AG04450 (cell line): ENCODE measurements at regions of chr1 and their contacts with region 1.

Region 1: GRCh38 chr1:179706339-179706941 is 36.7 kb upstream of the FAM163A start:
- DNase-seq: peak; percentile 38
- H3K4me3 ChIP-seq: no peak overlapping the region
- H3K27ac ChIP-seq: no peak overlapping the region
- H3K27me3 ChIP-seq: peaks cover 2% of the 10 kb centered on the region
- CTCF ChIP-seq: peak; percentile 80

Region 2: GRCh38 chr1:179586107-179586823 is 120.2 kb before region 1 on chr1:
- CTCF ChIA-PET with region 1: no interaction called
- POLR2A ChIA-PET with region 1: no interaction called
- DNase-seq: no peak
- H3K4me3 ChIP-seq: peak overlapping the region; percentile 32; the same call in 1 of the 2 replicates
- H3K27ac ChIP-seq: no peak overlapping the region
- H3K27me3 ChIP-seq: peaks cover 17% of the 10 kb centered on the region
- CTCF ChIP-seq: peak; percentile 34

Region 3: DNA sequence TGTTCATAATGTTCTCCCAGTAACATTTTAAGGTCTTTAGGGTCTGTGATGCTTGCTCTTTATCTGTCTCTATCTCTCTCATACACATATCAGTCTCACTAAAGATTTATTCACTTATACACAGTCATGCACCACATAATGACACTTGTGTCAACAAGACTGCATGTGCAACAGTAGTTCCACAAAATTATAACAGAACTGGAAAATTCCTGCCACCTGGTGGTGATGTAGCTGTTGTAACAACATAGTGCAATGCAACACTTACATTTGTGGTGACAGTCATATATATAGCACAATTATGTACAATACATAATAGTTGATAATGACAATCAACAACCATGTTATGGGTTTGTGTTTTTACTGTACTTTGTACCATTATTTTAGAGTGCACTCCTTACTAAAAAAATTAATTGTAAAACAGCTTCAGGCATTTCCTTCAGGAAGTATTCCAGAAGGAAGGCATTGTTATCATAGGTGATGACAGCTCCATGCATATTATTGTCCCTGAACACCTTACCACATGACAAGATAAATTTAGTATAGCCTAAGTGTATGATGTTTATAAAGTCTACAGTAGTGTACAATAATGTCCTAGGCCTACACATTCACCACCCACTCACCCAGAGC is 106.7 kb before region 1 on chr1:
- CTCF ChIA-PET with region 1: no interaction called
- POLR2A ChIA-PET with region 1: no interaction called
- DNase-seq: no peak
- H3K4me3 ChIP-seq: no peak overlapping the region
- H3K27ac ChIP-seq: no peak overlapping the region
- H3K27me3 ChIP-seq: no peaks in the 10 kb centered on the region
- CTCF ChIP-seq: peak; percentile 39

Region 4: GRCh38 chr1:179719272-179719671 is 12.8 kb after region 1 on chr1:
- CTCF ChIA-PET with region 1: interaction called, 16 read pairs
- POLR2A ChIA-PET with region 1: no interaction called
- DNase-seq: no peak
- H3K4me3 ChIP-seq: no peak overlapping the region
- H3K27ac ChIP-seq: no peak overlapping the region
- H3K27me3 ChIP-seq: no peaks in the 10 kb centered on the region
- CTCF ChIP-seq: no peak

Region 5: GRCh38 chr1:179742717-179743678 is 36.6 kb after region 1 on chr1 and contains the start of gene FAM163A:
- CTCF ChIA-PET with region 1: interaction called, 10 read pairs
- POLR2A ChIA-PET with region 1: no interaction called
- DNase-seq: no peak
- H3K4me3 ChIP-seq: no peak within 1 kb of the TSS
- H3K27ac ChIP-seq: no peak within 1 kb of the TSS
- H3K27me3 ChIP-seq: peaks cover 44% of the 10 kb centered on the region
- CTCF ChIP-seq: no peak
- polyA plus RNA-seq, gene FAM163A: not detected in 2 replicates

Region 6: DNA sequence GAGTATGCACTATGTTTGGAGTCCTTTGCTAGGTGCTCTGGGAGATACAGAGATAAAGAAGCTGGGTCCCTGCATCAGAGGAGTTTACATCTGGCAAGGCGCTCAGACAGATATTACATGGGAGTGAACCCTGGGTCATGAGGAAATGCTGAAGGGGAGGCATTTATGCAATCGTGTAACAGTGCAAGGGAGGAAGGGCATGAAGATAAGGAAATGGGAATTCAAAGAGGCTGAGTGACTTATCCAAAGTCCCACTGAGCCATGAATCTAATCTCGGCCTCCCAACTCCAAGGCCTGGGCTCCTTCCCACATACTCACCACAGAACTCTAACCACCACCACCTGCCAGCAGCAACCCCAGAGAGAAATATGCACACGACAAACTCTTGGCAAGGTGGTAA is 88.2 kb after region 1 on chr1:
- CTCF ChIA-PET with region 1: interaction called, 29 read pairs
- POLR2A ChIA-PET with region 1: no interaction called
- DNase-seq: no peak
- H3K4me3 ChIP-seq: no peak overlapping the region
- H3K27ac ChIP-seq: no peak overlapping the region
- H3K27me3 ChIP-seq: peaks cover 33% of the 10 kb centered on the region
- CTCF ChIP-seq: no peak

Region 7: GRCh38 chr1:179824265-179824664 is 117.8 kb after region 1 on chr1:
- CTCF ChIA-PET with region 1: interaction called, 10 read pairs
- POLR2A ChIA-PET with region 1: no interaction called
- DNase-seq: no peak
- H3K4me3 ChIP-seq: no peak overlapping the region
- H3K27ac ChIP-seq: no peak overlapping the region
- H3K27me3 ChIP-seq: peaks cover 15% of the 10 kb centered on the region
- CTCF ChIP-seq: no peak

Region 8: GRCh38 chr1:179867807-179868330 is 161.4 kb after region 1 on chr1:
- CTCF ChIA-PET with region 1: interaction called, 11 read pairs
- POLR2A ChIA-PET with region 1: no interaction called
- DNase-seq: no peak
- H3K4me3 ChIP-seq: no peak overlapping the region
- H3K27ac ChIP-seq: no peak overlapping the region
- H3K27me3 ChIP-seq: no peaks in the 10 kb centered on the region
- CTCF ChIP-seq: peak; percentile 84